HepG2 (cell line): ENCODE measurements at regions of chr6 and their contacts with region 1.

Region 1: GRCh38 chr6:139364302-139364981 is 10.0 kb downstream of the CITED2 start:
- DNase-seq: no peak
- ATAC-seq: peak; percentile 60
- H3K4me3 ChIP-seq: no peak overlapping the region
- H3K27ac ChIP-seq: no peak overlapping the region
- H3K4me1 ChIP-seq: peaks cover 20% of the 10 kb centered on the region
- H3K27me3 ChIP-seq: 0 out of 5 replicates have a peak, but pooled peaks cover 0 to 8% of the 10 kb centered on the region in 2 experiments
- CTCF ChIP-seq: peak; percentile 81
- EP300 ChIP-seq: no peak
- POLR2A ChIP-seq: no peak
- RAD21 ChIP-seq: peak; percentile 88

Region 2: GRCh38 chr6:138692058-138692977 is 672.1 kb before region 1 on chr6:
- CTCF ChIA-PET with region 1: no interaction called
- POLR2A ChIA-PET with region 1: no interaction called
- in situ Hi-C with region 1: loop called (anchors 25 kb)
- intact Hi-C with region 1: loop called (anchors 5 kb)
- DNase-seq: peak; percentile 30
- ATAC-seq: peak; percentile 77
- H3K4me3 ChIP-seq: peak overlapping the region; percentile 87 to 94 (median 90)
- H3K27ac ChIP-seq: peak overlapping the region; percentile 25
- H3K4me1 ChIP-seq: peaks cover 20% of the 10 kb centered on the region
- H3K27me3 ChIP-seq: peaks cover 0 to 13% of the 10 kb centered on the region in 2 experiments; a peak in 1 of 5 replicates
- CTCF ChIP-seq: peak; percentile 80
- EP300 ChIP-seq: 0 out of 4 replicates have a peak, but pooled peaks of 1 of the 2 experiments have one; percentile 15
- POLR2A ChIP-seq: no peak; a peak in 1 of 4 replicates
- RAD21 ChIP-seq: peak; percentile 83

Region 3: GRCh38 chr6:138817822-138818308 is 546.6 kb before region 1 on chr6:
- CTCF ChIA-PET with region 1: interaction called, 13 read pairs
- POLR2A ChIA-PET with region 1: no interaction called
- in situ Hi-C with region 1: loop called (anchors 10 kb)
- intact Hi-C with region 1: loop called (anchors 1 kb)
- DNase-seq: no peak
- ATAC-seq: no peak
- H3K4me3 ChIP-seq: no peak overlapping the region
- H3K27ac ChIP-seq: no peak overlapping the region
- H3K4me1 ChIP-seq: peaks cover 57% of the 10 kb centered on the region
- H3K27me3 ChIP-seq: peaks cover 0 to 13% of the 10 kb centered on the region in 2 experiments; a peak in 1 of 5 replicates
- CTCF ChIP-seq: no peak
- EP300 ChIP-seq: no peak
- POLR2A ChIP-seq: no peak
- RAD21 ChIP-seq: no peak

Region 4: DNA sequence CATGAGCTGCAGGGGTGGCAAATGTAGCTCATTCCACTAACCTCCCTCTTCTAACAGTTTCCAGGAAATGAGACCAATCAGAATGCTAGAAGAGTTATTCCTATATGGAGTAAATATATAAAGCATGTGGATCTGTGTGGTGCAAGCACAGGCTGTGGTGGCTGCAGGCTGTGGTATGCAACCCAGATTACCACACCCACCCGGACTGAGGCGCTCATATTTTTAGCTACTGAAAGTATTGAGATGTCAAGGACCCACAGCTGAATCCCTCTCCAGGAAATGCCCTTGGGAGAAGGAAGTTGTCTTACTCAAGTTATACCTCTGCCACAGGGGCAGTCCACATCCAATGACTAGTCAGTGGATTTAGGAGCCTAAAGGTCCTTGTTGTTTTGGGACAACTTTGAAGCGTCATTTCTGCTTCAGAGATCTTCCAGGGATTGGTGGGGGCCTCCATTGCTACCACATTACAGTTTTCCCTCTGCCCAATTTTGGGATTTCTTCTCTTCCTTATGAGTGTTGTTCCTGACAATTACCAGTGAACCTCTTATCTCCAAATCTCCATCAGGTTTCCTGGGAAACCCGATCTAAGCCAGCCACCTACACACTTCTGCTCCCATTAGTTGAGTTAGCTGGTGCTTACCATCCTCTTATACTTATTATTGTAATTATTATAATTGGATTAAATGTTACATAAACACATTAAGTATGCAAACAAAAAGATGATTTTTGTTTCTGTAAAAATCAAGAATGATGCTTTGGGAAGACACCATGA is 364.3 kb before region 1 on chr6:
- CTCF ChIA-PET with region 1: no interaction called
- POLR2A ChIA-PET with region 1: no interaction called
- in situ Hi-C with region 1: no loop called
- intact Hi-C with region 1: no loop called
- DNase-seq: no peak
- ATAC-seq: peak; percentile 51; the same call in 2 of the 3 replicates
- H3K4me3 ChIP-seq: no peak overlapping the region
- H3K27ac ChIP-seq: no peak overlapping the region
- H3K4me1 ChIP-seq: peaks cover 16% of the 10 kb centered on the region
- H3K27me3 ChIP-seq: no peaks in the 10 kb centered on the region
- CTCF ChIP-seq: no peak
- EP300 ChIP-seq: no peak
- POLR2A ChIP-seq: no peak
- RAD21 ChIP-seq: no peak

Region 5: GRCh38 chr6:139117734-139118133 is 246.7 kb before region 1 on chr6:
- CTCF ChIA-PET with region 1: interaction called, 4 read pairs
- POLR2A ChIA-PET with region 1: no interaction called
- in situ Hi-C with region 1: no loop called
- intact Hi-C with region 1: loop called (anchors 1 kb)
- DNase-seq: no peak
- ATAC-seq: no peak
- H3K4me3 ChIP-seq: no peak overlapping the region
- H3K27ac ChIP-seq: no peak overlapping the region
- H3K4me1 ChIP-seq: no peaks in the 10 kb centered on the region
- H3K27me3 ChIP-seq: no peaks in the 10 kb centered on the region; a peak in 1 of 5 replicates
- CTCF ChIP-seq: no peak
- EP300 ChIP-seq: no peak
- POLR2A ChIP-seq: no peak
- RAD21 ChIP-seq: no peak

Region 6: DNA sequence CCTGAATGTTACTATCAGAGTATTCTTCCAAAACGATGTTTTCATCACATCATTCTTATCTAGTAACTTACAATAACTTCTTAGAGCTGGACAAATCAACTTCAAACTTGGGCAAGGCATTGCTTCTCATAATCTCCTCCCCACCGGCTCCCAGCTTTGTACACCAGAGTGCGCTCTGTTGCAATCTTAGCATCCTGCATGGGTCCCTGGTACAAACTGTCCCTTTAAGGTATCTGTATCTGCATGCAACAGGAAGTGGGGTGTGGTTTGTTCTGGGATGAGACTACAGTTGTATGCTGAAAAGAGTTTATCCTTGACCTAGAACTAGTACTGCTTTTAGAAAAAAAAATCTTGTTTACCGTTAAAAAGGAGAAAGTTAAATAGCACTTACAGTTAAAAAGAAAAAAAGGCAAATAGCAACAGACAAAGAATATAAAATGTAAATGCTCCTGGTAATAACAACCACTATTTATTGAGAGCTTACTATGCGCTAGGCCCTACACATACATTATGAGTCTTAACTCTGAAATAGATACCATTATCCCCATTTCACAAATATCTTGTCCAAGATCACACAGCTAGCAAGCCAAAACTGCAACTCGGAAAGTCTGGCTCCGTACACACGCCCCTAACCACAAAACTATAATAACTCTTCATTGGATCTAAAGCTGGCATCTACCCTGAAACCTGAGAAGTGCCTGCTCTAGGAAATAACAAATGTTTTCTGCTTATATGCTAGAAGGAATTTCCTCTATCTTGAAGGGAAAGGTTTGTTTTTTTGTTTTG is 239.4 kb before region 1 on chr6:
- CTCF ChIA-PET with region 1: interaction called, 9 read pairs
- POLR2A ChIA-PET with region 1: no interaction called
- in situ Hi-C with region 1: loop called (anchors 10 kb)
- intact Hi-C with region 1: loop called (anchors 1 kb)
- DNase-seq: peak; percentile 61
- ATAC-seq: peak; percentile 99
- H3K4me3 ChIP-seq: no peak overlapping the region
- H3K27ac ChIP-seq: no peak overlapping the region
- H3K4me1 ChIP-seq: no peaks in the 10 kb centered on the region
- H3K27me3 ChIP-seq: peaks cover 0 to 3% of the 10 kb centered on the region in 2 experiments; a peak in 2 of 5 replicates
- CTCF ChIP-seq: peak; percentile 65
- EP300 ChIP-seq: no peak
- POLR2A ChIP-seq: no peak
- RAD21 ChIP-seq: peak; percentile 20; the same call in 1 of the 2 replicates

Region 7: DNA sequence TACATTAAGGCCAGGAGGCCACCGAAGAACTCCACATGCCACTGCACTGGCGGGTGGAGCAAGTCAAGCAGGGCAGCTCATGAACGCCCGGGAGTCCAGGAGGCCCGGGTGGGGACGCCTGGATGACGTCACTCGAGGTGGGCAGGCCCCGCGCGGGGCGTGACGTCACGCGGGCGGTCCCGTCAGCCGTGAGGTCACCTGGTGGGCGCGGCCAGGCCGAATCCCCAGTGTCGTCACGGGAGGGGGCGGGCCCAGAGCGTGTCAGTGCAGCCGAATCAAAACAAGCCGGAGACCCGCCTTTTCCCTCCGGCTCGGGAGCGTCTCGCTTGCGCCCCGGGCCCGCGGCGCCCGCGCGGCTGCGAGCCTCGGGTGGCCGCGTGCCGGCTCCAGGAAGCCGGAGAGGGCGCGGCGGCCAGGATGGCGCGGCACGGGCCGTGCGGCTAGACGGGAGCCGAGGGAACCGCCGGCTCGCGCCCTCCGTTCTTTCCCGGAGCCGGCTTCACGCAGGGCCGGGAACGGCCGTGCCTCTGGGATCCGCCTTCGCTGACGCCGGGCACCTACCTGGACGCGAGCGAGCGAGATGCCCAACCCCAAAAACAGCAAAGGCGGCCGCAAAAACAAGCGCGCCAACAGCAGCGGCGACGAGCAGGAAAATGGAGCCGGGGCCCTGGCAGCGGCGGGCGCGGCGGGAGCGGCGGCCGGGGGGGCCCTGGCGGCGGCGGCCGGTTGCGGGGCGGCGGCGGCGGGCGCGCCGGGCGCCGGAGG is 229.4 kb before region 1 on chr6 and contains the start of gene HECA:
- CTCF ChIA-PET with region 1: no interaction called
- POLR2A ChIA-PET with region 1: no interaction called
- in situ Hi-C with region 1: loop called (anchors 10 kb)
- intact Hi-C with region 1: no loop called
- DNase-seq: peak; percentile 55
- ATAC-seq: peak; percentile 76
- H3K4me3 ChIP-seq: peak within 1 kb of the TSS; percentile 48 to 77 (median 69)
- H3K27ac ChIP-seq: no peak within 1 kb of the TSS
- H3K4me1 ChIP-seq: 0 out of 2 replicates have a peak, but pooled peaks cover 15% of the 10 kb centered on the region
- H3K27me3 ChIP-seq: peaks cover 5 to 47% of the 10 kb centered on the region in 2 experiments; a peak in 4 of 5 replicates
- CTCF ChIP-seq: no peak
- EP300 ChIP-seq: no peak
- POLR2A ChIP-seq: no peak
- RAD21 ChIP-seq: no peak
- total RNA-seq, gene HECA: 0.15 and 0.18 TPM in 2 replicates

Region 8: GRCh38 chr6:139219271-139219729 is 145.1 kb before region 1 on chr6:
- CTCF ChIA-PET with region 1: interaction called, 9 read pairs
- POLR2A ChIA-PET with region 1: no interaction called
- in situ Hi-C with region 1: loop called (anchors 10 kb)
- intact Hi-C with region 1: loop called (anchors 1 kb)
- DNase-seq: peak; percentile 75
- ATAC-seq: peak; percentile 100
- H3K4me3 ChIP-seq: no peak overlapping the region
- H3K27ac ChIP-seq: no peak overlapping the region
- H3K4me1 ChIP-seq: no peaks in the 10 kb centered on the region
- H3K27me3 ChIP-seq: no peaks in the 10 kb centered on the region
- CTCF ChIP-seq: peak; percentile 97
- EP300 ChIP-seq: no peak
- POLR2A ChIP-seq: no peak
- RAD21 ChIP-seq: peak; percentile 86

Region 9: GRCh38 chr6:139349464-139350020 is 14.9 kb before region 1 on chr6:
- CTCF ChIA-PET with region 1: no interaction called
- POLR2A ChIA-PET with region 1: no interaction called
- in situ Hi-C with region 1: no loop called
- intact Hi-C with region 1: no loop called
- DNase-seq: no peak
- ATAC-seq: no peak
- H3K4me3 ChIP-seq: no peak overlapping the region
- H3K27ac ChIP-seq: no peak overlapping the region
- H3K4me1 ChIP-seq: no peaks in the 10 kb centered on the region
- H3K27me3 ChIP-seq: no peaks in the 10 kb centered on the region
- CTCF ChIP-seq: no peak
- EP300 ChIP-seq: no peak
- POLR2A ChIP-seq: no peak
- RAD21 ChIP-seq: no peak

Region 10: DNA sequence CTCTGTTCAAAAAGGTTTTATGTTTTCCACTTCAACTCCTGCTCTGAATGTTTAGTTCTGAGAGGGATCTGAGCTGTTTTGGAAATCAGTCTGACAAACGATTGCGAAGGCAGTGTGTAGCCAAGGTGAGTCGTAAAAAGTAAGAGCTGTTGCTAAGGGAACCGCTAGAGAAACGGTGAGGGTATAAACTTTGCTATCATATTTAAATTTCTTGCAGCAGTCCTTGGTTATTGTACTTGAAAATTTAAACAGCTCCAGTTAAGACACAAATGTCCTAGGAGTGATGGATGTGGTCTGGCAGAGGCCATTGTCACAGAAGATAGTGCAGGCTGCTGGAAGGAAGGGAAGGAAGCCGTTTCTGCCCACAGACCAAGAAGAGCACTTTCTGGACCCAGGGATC is 74.9 kb after region 1 on chr6:
- CTCF ChIA-PET with region 1: no interaction called
- POLR2A ChIA-PET with region 1: no interaction called
- in situ Hi-C with region 1: no loop called
- intact Hi-C with region 1: no loop called
- DNase-seq: no peak
- ATAC-seq: no peak
- H3K4me3 ChIP-seq: no peak overlapping the region
- H3K27ac ChIP-seq: no peak overlapping the region
- H3K4me1 ChIP-seq: no peaks in the 10 kb centered on the region
- H3K27me3 ChIP-seq: peaks cover 0 to 1% of the 10 kb centered on the region in 2 experiments; a peak in 1 of 5 replicates
- CTCF ChIP-seq: no peak
- EP300 ChIP-seq: no peak
- POLR2A ChIP-seq: no peak
- RAD21 ChIP-seq: no peak